A549 (cell line): ENCODE measurements at regions of chr1 and their contacts with region 1.

Region 1: GRCh38 chr1:61056573-61057439 is 25.6 kb upstream of the NFIA start:
- DNase-seq: peak in 1 of 2 experiments; percentile 57
- ATAC-seq: peak; percentile 62 to 68; a peak in 5 of 6 replicates
- H3K4me3 ChIP-seq: peak overlapping the region; percentile 92
- H3K27ac ChIP-seq: peak overlapping the region; percentile 90 to 92
- H3K4me1 ChIP-seq: peaks cover 35% of the 10 kb centered on the region
- CTCF ChIP-seq: no peak
- EP300 ChIP-seq: no peak
- POLR2A ChIP-seq: no peak
- RAD21 ChIP-seq: no peak

Region 2: GRCh38 chr1:61077676-61078541 is 21.1 kb after region 1 on chr1:
- CTCF ChIA-PET with region 1: interaction called, 5 read pairs
- POLR2A ChIA-PET with region 1: interaction called, 12 read pairs
- DNase-seq: peak; percentile 92 to 98
- ATAC-seq: peak; percentile 25 to 73; a peak in 5 of 6 replicates
- H3K4me3 ChIP-seq: peak overlapping the region; percentile 54
- H3K27ac ChIP-seq: peak overlapping the region; percentile 88 to 91
- H3K4me1 ChIP-seq: peaks cover 34% of the 10 kb centered on the region
- CTCF ChIP-seq: no peak
- EP300 ChIP-seq: no peak
- POLR2A ChIP-seq: no peak
- RAD21 ChIP-seq: no peak